ENCODE measurements at regions of chr11 and their contacts with region 1.

Region 1: DNA sequence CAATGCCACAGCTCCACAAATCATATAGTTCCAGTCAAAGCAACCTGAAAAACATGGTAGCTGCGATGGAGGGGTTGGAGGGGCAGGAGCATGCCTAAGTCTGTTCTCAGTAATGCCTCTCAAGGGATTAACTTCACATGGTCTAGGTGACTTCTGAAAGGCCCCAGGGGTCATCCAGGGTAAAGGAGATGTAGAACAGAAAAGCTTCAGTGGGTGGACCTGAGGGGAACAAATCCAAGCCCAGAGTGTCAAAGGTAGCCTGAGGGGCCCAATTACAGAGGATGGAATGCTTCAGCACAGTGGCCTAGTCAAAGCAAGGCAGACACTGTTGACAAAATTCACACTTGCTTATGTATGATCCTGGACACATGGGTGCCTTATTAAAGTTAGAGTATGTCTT is 23.3 kb downstream of the OR4D9 start:
- DNase-seq: no peak
- H3K4me3 ChIP-seq: no peak overlapping the region
- H3K27ac ChIP-seq: no peak overlapping the region
- H3K4me1 ChIP-seq: no peaks in the 10 kb centered on the region
- H3K27me3 ChIP-seq: no peaks in the 10 kb centered on the region
- CTCF ChIP-seq: no peak

Region 2: DNA sequence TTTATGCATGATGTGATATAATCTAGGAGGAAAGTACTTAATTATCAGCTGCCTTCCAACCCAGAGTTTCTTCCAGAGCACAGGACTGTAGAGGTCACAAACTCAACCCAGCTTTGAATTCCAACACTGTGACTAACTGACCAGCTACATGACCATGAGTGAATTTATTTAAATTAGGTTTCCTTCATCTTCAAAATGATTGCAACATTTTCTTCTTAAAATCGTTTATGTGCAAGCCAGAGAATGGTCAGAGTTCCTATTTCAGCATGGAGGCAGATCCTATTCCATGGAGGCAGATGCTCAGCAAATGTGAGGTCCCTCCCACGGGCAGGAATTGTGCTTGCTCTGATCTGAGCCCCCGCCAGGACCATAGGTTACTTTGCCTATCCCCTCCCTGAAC is 38.6 kb after region 1 on chr11:
- intact Hi-C with region 1: loop called (anchors 5 kb)
- DNase-seq: no peak
- H3K4me3 ChIP-seq: no peak overlapping the region
- H3K27ac ChIP-seq: no peak overlapping the region
- H3K4me1 ChIP-seq: no peaks in the 10 kb centered on the region
- H3K27me3 ChIP-seq: no peaks in the 10 kb centered on the region
- CTCF ChIP-seq: no peak

Region 3: GRCh38 chr11:59641156-59641555 is 106.5 kb after region 1 on chr11:
- intact Hi-C with region 1: no loop called
- DNase-seq: no peak
- H3K4me3 ChIP-seq: no peak overlapping the region
- H3K27ac ChIP-seq: no peak overlapping the region
- H3K4me1 ChIP-seq: no peaks in the 10 kb centered on the region
- H3K27me3 ChIP-seq: no peaks in the 10 kb centered on the region
- CTCF ChIP-seq: no peak

Region 4: DNA sequence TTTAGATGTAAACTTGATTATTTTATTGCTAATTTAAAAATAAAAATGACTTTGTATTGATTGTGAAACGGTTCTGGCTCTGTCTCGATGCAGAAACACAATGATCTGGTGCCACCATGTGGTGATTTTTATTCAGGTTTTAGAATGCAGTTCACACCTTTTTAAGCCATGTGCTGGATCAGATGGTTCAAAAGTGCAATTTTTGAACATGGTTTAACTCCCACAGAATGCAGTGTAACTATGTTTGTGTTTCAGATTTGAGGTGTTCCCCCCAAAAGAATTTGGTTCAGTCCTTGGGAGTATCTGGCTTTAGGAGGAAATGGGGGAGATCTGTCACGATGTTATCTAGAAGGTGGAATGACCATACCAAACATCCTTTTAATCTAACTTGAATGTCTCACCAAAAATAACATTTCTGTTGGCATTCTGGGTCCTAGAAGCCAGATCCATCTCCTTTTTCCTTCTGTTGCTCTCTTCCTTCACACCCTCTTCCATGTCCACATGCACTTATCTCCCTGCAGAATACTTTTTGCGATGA is 268.0 kb after region 1 on chr11:
- intact Hi-C with region 1: loop called (anchors 5 kb)
- DNase-seq: no peak
- H3K4me3 ChIP-seq: no peak overlapping the region
- H3K27ac ChIP-seq: peak overlapping the region; percentile 22 to 68
- H3K4me1 ChIP-seq: peaks cover 0 to 4% of the 10 kb centered on the region in 2 donors
- H3K27me3 ChIP-seq: no peaks in the 10 kb centered on the region
- CTCF ChIP-seq: peak; percentile 51 to 69 (median 68)

Region 5: DNA sequence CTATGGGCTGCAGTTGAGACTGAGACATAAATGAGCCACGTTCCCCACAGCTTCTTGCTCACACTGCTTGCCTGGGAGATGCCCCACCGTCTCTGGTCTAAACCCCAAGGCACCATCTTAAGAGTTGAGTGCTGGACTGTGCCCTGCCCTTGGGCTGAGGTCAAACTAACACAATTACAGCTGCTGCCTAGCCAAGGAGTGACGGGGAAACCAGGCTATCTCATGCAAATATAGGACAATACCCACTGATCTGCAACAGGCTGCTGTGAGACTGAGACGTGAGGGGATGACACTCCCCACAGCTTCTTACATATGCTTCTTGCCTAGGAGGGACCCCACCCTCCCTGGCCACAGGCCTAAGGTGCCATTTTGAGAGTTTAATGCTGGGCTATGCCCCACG is 1157.0 kb after region 1 on chr11:
- intact Hi-C with region 1: no loop called
- DNase-seq: no peak
- H3K4me3 ChIP-seq: no peak overlapping the region
- H3K27ac ChIP-seq: no peak overlapping the region
- H3K4me1 ChIP-seq: no peaks in the 10 kb centered on the region
- H3K27me3 ChIP-seq: no peaks in the 10 kb centered on the region
- CTCF ChIP-seq: no peak